ENCODE measurements at regions of chr15 and their contacts with region 1.

Region 1: DNA sequence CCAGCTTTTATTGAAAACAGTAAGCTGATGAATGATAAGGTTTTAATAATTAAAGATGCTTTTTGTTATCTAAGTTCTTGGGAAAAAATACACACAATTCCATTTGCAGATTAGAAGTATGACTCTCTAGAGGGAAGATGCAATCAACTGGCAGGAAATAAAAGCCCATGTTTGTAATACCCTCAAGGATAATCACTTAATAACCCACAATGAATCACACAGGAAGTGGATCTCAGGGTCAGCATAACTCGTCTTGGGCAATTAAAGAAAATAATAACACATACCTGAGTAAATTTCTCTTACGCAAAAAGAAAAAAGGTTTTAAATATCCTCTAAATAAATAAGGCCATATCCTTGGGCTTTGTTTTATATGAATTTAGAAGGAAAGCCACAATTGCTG is 9.4 kb upstream of the EID1 start:
- DNase-seq: no peak
- ATAC-seq: no peak
- H3K4me3 ChIP-seq: no peak overlapping the region
- H3K27ac ChIP-seq: no peak overlapping the region
- H3K4me1 ChIP-seq: no peaks in the 10 kb centered on the region
- H3K27me3 ChIP-seq: no peaks in the 10 kb centered on the region

Region 2: GRCh38 chr15:48440084-48440483 is 428.5 kb before region 1 on chr15:
- intact Hi-C with region 1: no loop called
- DNase-seq: peak; percentile 35 to 67 (median 55)
- ATAC-seq: peak; percentile 72 to 84
- H3K4me3 ChIP-seq: no peak overlapping the region
- H3K27ac ChIP-seq: peak overlapping the region; percentile 30
- H3K4me1 ChIP-seq: no peaks in the 10 kb centered on the region
- H3K27me3 ChIP-seq: no peaks in the 10 kb centered on the region

Region 3: GRCh38 chr15:48925714-48926223 is 57.2 kb after region 1 on chr15:
- intact Hi-C with region 1: no loop called
- DNase-seq: no peak
- ATAC-seq: peak; percentile 67 to 86
- H3K4me3 ChIP-seq: no peak overlapping the region
- H3K27ac ChIP-seq: peak overlapping the region; percentile 32
- H3K4me1 ChIP-seq: no peaks in the 10 kb centered on the region
- H3K27me3 ChIP-seq: no peaks in the 10 kb centered on the region

Region 4: GRCh38 chr15:48984811-48985352 is 116.3 kb after region 1 on chr15:
- intact Hi-C with region 1: loop called in 1 of 4 experiments (anchors 5 kb)
- DNase-seq: no peak
- ATAC-seq: peak; percentile 21 to 37
- H3K4me3 ChIP-seq: no peak overlapping the region
- H3K27ac ChIP-seq: no peak overlapping the region
- H3K4me1 ChIP-seq: peaks cover 4% of the 10 kb centered on the region
- H3K27me3 ChIP-seq: no peaks in the 10 kb centered on the region